CD4-positive, alpha-beta memory T cell (primary cell): ENCODE measurements at regions of chr17 and their contacts with region 1.

Region 1: GRCh38 chr17:35448214-35448898 is at the start of gene SLFN13:
- DNase-seq: peak; percentile 80 to 92 (median 81)
- H3K4me3 ChIP-seq: peak within 1 kb of the TSS; percentile 1 to 62
- H3K4me3 Mint-ChIP-seq: peak within 1 kb of the TSS; percentile 85 to 92 (median 88)
- H3K27ac ChIP-seq: peak within 1 kb of the TSS; percentile 55
- H3K27ac Mint-ChIP-seq: peak within 1 kb of the TSS; percentile 78 to 95 (median 89)
- H3K4me1 ChIP-seq: peaks cover 8% of the 10 kb centered on the region
- H3K4me1 Mint-ChIP-seq: peaks cover 6 to 18% (median 11%) of the 10 kb centered on the region in 4 donors
- H3K27me3 ChIP-seq: no peaks in the 10 kb centered on the region
- H3K27me3 Mint-ChIP-seq: no peaks in the 10 kb centered on the region
- total RNA-seq, gene SLFN13: 24.6 to 27.3 TPM

Region 2: DNA sequence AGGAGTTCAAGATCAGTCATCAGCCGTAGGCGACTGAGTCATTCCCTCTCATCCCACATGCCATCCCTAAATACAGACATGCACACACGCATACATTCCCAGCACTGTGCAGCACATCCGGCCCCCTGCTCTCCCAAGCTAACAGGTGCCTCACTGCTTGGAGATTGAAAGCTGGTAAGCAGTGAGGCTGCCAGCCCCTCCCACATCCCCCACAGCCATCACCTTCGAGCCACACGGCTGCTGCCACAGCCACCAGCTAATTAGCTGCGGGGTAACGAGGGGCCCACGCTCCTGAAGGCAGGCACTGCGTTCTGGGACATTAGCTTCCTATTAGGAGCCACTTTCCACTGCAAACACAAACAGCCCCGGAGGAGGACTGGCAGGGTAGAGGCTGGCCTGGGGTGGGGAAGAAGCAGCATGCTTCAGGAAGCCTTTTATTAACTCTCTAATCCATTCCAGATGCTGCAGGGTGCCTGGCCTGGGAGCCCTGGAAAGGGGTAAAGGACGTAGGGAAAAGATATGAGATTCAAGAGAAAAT is 666.7 kb before region 1 on chr17:
- CTCF ChIA-PET with region 1: no interaction called
- POLR2A ChIA-PET with region 1: no interaction called
- intact Hi-C with region 1: no loop called
- DNase-seq: no peak
- H3K4me3 ChIP-seq: no peak overlapping the region
- H3K4me3 Mint-ChIP-seq: no peak overlapping the region
- H3K27ac ChIP-seq: no peak overlapping the region
- H3K27ac Mint-ChIP-seq: no peak overlapping the region
- H3K4me1 ChIP-seq: no peaks in the 10 kb centered on the region
- H3K4me1 Mint-ChIP-seq: peaks cover 0 to 4% (median 1%) of the 10 kb centered on the region in 4 donors
- H3K27me3 ChIP-seq: no peaks in the 10 kb centered on the region
- H3K27me3 Mint-ChIP-seq: peaks cover 6 to 12% of the 10 kb centered on the region in 2 donors

Region 3: DNA sequence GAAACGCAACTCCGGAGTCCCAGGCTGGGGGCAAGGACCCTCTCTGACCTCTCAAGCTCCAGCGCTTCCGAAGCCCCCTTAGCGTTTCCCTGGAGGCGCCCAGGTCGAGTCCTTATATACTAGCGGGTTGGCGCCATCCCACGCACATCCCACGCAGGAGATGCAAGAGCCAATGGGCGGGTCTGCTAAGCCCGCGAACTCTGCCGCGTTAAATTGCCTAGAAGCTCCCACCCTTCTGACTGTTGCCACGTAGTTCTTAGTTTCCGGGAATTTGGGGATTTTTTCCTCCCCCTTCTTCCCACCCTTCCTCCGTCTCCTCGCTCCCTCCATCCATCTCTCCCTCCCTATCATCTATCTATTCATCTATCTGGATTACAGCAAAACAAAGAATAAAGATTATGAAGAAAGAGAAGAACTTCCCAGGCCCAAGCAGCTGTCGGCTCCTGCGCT is 74.8 kb before region 1 on chr17 and contains the start of gene SLFN11:
- CTCF ChIA-PET with region 1: no interaction called
- POLR2A ChIA-PET with region 1: interaction called, 4 read pairs
- intact Hi-C with region 1: loop called (anchors 2 kb)
- DNase-seq: peak; percentile 83 to 91 (median 83)
- H3K4me3 ChIP-seq: peak within 1 kb of the TSS; percentile 54 to 85
- H3K4me3 Mint-ChIP-seq: peak within 1 kb of the TSS; percentile 96 to 100 (median 99)
- H3K27ac ChIP-seq: peak within 1 kb of the TSS; percentile 98
- H3K27ac Mint-ChIP-seq: peak within 1 kb of the TSS; percentile 99 to 100 (median 100)
- H3K4me1 ChIP-seq: peaks cover 45% of the 10 kb centered on the region
- H3K4me1 Mint-ChIP-seq: peaks cover 32 to 71% (median 50%) of the 10 kb centered on the region in 4 donors
- H3K27me3 ChIP-seq: no peaks in the 10 kb centered on the region
- H3K27me3 Mint-ChIP-seq: no peaks in the 10 kb centered on the region
- total RNA-seq, gene SLFN11: 72.4 to 74.2 TPM

Region 4: GRCh38 chr17:35432176-35433074 is 15.9 kb before region 1 on chr17 and contains the start of gene SLFN12:
- CTCF ChIA-PET with region 1: interaction called, 10 read pairs
- POLR2A ChIA-PET with region 1: interaction called, 15 read pairs
- intact Hi-C with region 1: no loop called
- DNase-seq: peak; percentile 67 to 74 (median 72)
- H3K4me3 ChIP-seq: peak within 1 kb of the TSS; percentile 79 to 83
- H3K4me3 Mint-ChIP-seq: peak within 1 kb of the TSS; percentile 93 to 100 (median 97)
- H3K27ac ChIP-seq: peak within 1 kb of the TSS; percentile 61
- H3K27ac Mint-ChIP-seq: peak within 1 kb of the TSS; percentile 88 to 97 (median 94)
- H3K4me1 ChIP-seq: peaks cover 44% of the 10 kb centered on the region
- H3K4me1 Mint-ChIP-seq: peaks cover 32 to 68% (median 48%) of the 10 kb centered on the region in 4 donors
- H3K27me3 ChIP-seq: no peaks in the 10 kb centered on the region
- H3K27me3 Mint-ChIP-seq: no peaks in the 10 kb centered on the region
- total RNA-seq, gene SLFN12: 6.5 to 8.9 TPM

Region 5: DNA sequence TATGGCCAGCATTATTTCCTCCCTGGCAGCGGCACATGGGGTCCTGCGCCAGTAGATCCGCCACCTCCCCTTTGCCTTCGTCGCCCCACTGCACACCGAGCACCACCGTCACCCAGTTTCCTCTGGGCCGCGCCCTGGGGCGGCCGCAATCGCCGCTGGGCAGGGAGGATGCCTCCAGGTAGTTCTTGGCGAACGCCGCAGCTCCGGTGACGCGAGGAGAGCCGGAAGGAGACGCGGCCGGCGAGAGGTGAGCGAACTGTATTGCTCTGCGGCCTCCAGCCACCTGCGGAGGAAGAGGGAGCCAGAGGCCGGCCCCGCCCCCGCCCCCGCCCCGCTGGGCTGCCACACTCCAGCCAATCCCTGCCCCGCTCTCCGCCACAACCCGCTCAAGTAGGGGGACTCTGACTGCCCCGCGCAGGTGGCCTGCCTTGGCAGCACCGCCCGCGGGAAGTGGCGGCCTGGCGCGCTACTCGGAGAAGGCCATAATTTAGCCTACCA is 12.0 kb after region 1 on chr17:
- CTCF ChIA-PET with region 1: interaction called, 5 read pairs
- POLR2A ChIA-PET with region 1: interaction called, 7 read pairs
- intact Hi-C with region 1: loop called (anchors 1 kb)
- DNase-seq: peak; percentile 69 to 81 (median 80)
- H3K4me3 ChIP-seq: peak overlapping the region in 1 of 2 donors; percentile 16
- H3K4me3 Mint-ChIP-seq: peak overlapping the region; percentile 62 to 91 (median 81)
- H3K27ac ChIP-seq: peak overlapping the region; percentile 24
- H3K27ac Mint-ChIP-seq: peak overlapping the region; percentile 77 to 95 (median 93)
- H3K4me1 ChIP-seq: peaks cover 15% of the 10 kb centered on the region
- H3K4me1 Mint-ChIP-seq: peaks cover 20 to 36% (median 28%) of the 10 kb centered on the region in 4 donors
- H3K27me3 ChIP-seq: no peaks in the 10 kb centered on the region
- H3K27me3 Mint-ChIP-seq: no peaks in the 10 kb centered on the region

Region 6: DNA sequence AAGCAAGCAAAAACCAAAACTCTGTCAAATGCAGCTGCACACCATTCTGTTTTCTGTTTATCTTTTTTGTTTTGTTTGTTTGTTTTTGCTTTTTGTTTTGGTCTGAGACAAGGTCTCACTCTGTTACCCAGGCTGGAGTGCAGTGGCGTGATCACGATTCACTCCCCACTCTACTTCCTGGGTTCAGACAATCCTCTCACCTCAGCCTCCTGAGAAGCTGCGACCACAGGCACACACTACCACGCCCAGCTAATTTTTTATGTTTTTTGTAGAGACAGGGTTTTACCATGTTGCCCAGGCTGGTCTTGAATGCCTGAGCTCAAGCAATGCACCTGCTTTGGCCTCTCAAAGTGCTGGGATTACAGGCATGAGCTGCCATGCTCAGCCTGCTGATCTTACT is 19.5 kb after region 1 on chr17:
- CTCF ChIA-PET with region 1: interaction called, 7 read pairs
- POLR2A ChIA-PET with region 1: interaction called, 24 read pairs
- intact Hi-C with region 1: no loop called
- DNase-seq: peak in 4 of 5 donors; percentile 28 to 52 (median 40)
- H3K4me3 ChIP-seq: no peak overlapping the region
- H3K4me3 Mint-ChIP-seq: peak overlapping the region in 7 of 8 donors; percentile 17 to 68 (median 57)
- H3K27ac ChIP-seq: no peak overlapping the region
- H3K27ac Mint-ChIP-seq: peak overlapping the region; percentile 65 to 92 (median 86)
- H3K4me1 ChIP-seq: peaks cover 34% of the 10 kb centered on the region
- H3K4me1 Mint-ChIP-seq: peaks cover 40 to 64% (median 50%) of the 10 kb centered on the region in 4 donors
- H3K27me3 ChIP-seq: no peaks in the 10 kb centered on the region
- H3K27me3 Mint-ChIP-seq: no peaks in the 10 kb centered on the region

Region 7: GRCh38 chr17:35496470-35497290 is 48.3 kb after region 1 on chr17:
- CTCF ChIA-PET with region 1: no interaction called
- POLR2A ChIA-PET with region 1: no interaction called
- intact Hi-C with region 1: no loop called
- DNase-seq: no peak
- H3K4me3 ChIP-seq: no peak overlapping the region
- H3K4me3 Mint-ChIP-seq: peak overlapping the region in 1 of 8 donors; percentile 39
- H3K27ac ChIP-seq: no peak overlapping the region
- H3K27ac Mint-ChIP-seq: peak overlapping the region in 5 of 7 donors; percentile 29 to 77 (median 72)
- H3K4me1 ChIP-seq: peaks cover 42% of the 10 kb centered on the region
- H3K4me1 Mint-ChIP-seq: peaks cover 29 to 74% (median 46%) of the 10 kb centered on the region in 4 donors
- H3K27me3 ChIP-seq: no peaks in the 10 kb centered on the region
- H3K27me3 Mint-ChIP-seq: no peaks in the 10 kb centered on the region

Region 8: DNA sequence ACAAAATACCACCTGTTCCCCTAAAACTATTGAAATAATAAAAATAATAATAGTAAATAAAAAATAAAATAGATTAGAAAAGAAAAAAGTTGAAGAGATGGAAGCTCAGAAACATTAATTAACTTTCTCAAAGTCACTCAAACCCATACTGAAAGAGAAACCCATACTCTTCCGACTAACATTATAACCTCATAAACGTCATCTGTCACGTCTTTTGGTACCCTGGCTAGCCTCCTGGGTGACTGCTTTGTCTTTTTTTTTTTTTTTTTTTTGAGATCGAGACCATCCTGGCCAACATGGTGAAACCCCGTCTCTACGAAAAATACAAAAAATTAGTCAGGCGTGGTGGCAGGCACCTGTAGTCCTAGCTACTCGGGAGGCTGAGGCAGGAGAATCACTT is 81.5 kb after region 1 on chr17:
- CTCF ChIA-PET with region 1: interaction called, 8 read pairs
- POLR2A ChIA-PET with region 1: interaction called, 13 read pairs
- intact Hi-C with region 1: loop called (anchors 5 kb)
- DNase-seq: no peak
- H3K4me3 ChIP-seq: no peak overlapping the region
- H3K4me3 Mint-ChIP-seq: peak overlapping the region in 7 of 8 donors; percentile 24 to 83 (median 65)
- H3K27ac ChIP-seq: no peak overlapping the region
- H3K27ac Mint-ChIP-seq: peak overlapping the region; percentile 26 to 93 (median 72)
- H3K4me1 ChIP-seq: peaks cover 70% of the 10 kb centered on the region
- H3K4me1 Mint-ChIP-seq: peaks cover 61 to 85% (median 73%) of the 10 kb centered on the region in 4 donors
- H3K27me3 ChIP-seq: no peaks in the 10 kb centered on the region
- H3K27me3 Mint-ChIP-seq: no peaks in the 10 kb centered on the region

Region 9: DNA sequence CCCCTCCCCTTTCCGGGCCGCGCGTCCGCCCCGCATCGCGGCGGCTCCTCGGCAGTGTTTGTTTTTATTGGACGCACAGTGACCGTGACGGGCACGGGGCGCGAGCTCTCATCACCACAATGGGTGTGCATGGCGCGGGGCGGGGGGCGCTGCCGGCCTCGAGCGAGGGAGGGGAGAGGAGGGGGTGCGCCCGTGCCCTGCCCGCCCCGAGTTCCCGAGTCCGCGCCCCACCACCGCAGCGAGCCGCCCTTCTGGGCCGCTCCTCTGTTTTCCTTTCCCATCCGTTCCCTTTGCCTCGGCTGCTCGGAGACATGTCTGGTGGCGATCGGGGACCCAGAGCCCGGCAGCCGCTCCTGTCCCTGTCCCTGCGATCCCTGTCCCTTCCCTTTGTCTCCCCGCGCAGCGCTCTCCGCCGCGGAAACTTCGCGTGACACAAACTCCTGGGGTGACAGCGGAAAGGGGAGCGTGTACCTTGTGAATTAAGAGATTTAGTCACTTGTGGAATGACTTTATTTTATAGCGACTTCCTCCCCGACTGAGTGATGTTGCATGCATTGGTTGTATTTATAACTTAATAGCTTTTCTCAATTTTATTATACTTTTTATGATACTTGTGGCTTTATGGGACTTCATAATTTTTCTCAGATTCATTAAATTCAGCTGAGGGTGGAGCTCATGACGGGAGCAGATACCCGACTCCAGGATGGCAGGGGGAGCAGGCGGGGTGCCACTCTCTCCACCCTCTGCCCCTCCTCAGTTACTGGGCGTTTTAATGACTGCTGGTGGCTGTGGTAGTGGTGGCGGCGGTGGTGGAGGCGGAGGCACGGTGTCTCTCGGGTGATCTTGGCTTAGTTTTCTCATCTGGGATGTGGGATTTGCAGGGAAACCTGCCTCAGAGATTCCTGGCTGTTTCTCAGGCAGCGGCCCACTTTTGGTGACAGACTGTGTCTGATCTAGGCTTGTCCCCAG is 1193.8 kb after region 1 on chr17:
- CTCF ChIA-PET with region 1: no interaction called
- POLR2A ChIA-PET with region 1: no interaction called
- intact Hi-C with region 1: no loop called
- DNase-seq: no peak
- H3K4me3 ChIP-seq: peak overlapping the region in 1 of 2 donors; percentile 19
- H3K4me3 Mint-ChIP-seq: peak overlapping the region; percentile 69 to 88 (median 84)
- H3K27ac ChIP-seq: no peak overlapping the region
- H3K27ac Mint-ChIP-seq: peak overlapping the region in 1 of 7 donors; percentile 19
- H3K4me1 ChIP-seq: peaks cover 19% of the 10 kb centered on the region
- H3K4me1 Mint-ChIP-seq: peaks cover 10 to 18% (median 14%) of the 10 kb centered on the region in 4 donors
- H3K27me3 ChIP-seq: peaks cover 44% of the 10 kb centered on the region
- H3K27me3 Mint-ChIP-seq: peaks cover 47 to 58% of the 10 kb centered on the region in 2 donors